CD8-positive, alpha-beta T cell (primary cell): ENCODE measurements at regions of chr20 and their contacts with region 1.

Region 1: GRCh38 chr20:32484958-32485769 is 100.0 kb downstream of the NOL4L start:
- DNase-seq: peak; percentile 72 to 92 (median 86)
- ATAC-seq: peak; percentile 82
- H3K4me3 ChIP-seq: peak overlapping the region; percentile 67 to 77
- H3K4me3 Mint-ChIP-seq: peak overlapping the region; percentile 91
- H3K27ac ChIP-seq: peak overlapping the region; percentile 46 to 62
- H3K27ac Mint-ChIP-seq: peak overlapping the region; percentile 94
- H3K4me1 ChIP-seq: peaks cover 36% of the 10 kb centered on the region
- H3K4me1 Mint-ChIP-seq: peaks cover 46% of the 10 kb centered on the region
- H3K27me3 ChIP-seq: no peaks in the 10 kb centered on the region
- H3K27me3 Mint-ChIP-seq: no peaks in the 10 kb centered on the region
- CTCF ChIP-seq: peak; percentile 88

Region 2: DNA sequence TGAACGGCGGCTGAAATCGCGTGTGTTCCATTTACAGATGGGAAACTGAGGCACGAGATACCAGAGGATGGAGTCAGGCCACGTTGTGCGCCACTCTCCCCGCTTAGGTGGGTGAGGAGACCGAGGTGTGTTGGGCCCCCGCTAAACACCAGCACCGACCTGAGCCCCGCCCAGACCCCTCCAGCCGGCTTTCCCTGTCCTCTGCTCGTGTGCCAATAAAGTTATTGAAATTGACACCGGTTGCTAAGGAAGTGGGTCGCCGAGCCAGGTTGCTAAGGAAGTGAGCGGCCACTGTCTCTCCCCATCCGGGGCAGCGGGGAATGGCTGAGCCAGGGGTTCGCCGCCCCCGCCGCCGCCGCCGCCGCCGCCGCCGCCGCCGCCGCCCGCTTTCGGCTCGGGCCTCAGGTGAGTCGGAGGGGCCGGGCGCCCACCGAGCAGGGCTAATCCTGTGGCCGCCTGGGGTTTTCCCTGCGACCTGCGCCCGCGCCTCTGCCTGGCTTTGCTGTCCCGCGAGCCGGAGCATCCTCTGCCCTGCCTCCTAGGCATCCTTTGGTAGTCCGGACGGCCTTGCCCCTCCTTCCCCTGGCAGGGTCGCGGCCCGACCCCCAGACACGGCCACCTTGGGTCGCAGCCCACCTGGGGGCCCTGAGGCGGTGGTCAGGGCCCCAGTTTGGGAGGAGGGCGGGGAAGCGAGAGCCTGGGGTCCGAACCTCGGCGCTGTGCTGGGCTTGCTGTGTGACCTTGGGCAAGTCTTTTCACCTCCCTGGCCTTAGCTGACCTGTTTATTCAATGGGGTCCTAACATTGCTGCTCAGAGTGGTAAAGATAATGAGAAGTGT is 207.6 kb before region 1 on chr20 and contains the start of gene KIF3B:
- CTCF ChIA-PET with region 1: no interaction called
- POLR2A ChIA-PET with region 1: no interaction called
- intact Hi-C with region 1: loop called in 1 of 2 experiments (anchors 5 kb)
- DNase-seq: peak; percentile 68 to 94 (median 87)
- ATAC-seq: peak; percentile 85
- H3K4me3 ChIP-seq: peak within 1 kb of the TSS; percentile 91 to 97
- H3K4me3 Mint-ChIP-seq: peak within 1 kb of the TSS; percentile 90
- H3K27ac ChIP-seq: peak within 1 kb of the TSS; percentile 64 to 86
- H3K27ac Mint-ChIP-seq: peak within 1 kb of the TSS; percentile 93
- H3K4me1 ChIP-seq: peaks cover 20% of the 10 kb centered on the region
- H3K4me1 Mint-ChIP-seq: peaks cover 44% of the 10 kb centered on the region
- H3K27me3 ChIP-seq: no peaks in the 10 kb centered on the region
- H3K27me3 Mint-ChIP-seq: no peaks in the 10 kb centered on the region
- CTCF ChIP-seq: no peak
- total RNA-seq, gene KIF3B: 7.1 to 8.1 TPM

Region 3: GRCh38 chr20:32437391-32438074 is 47.6 kb before region 1 on chr20:
- CTCF ChIA-PET with region 1: interaction called, 3 read pairs
- POLR2A ChIA-PET with region 1: interaction called, 3 read pairs
- intact Hi-C with region 1: loop called in 1 of 2 experiments (anchors 2 kb)
- DNase-seq: peak in 3 of 9 experiments; percentile 26 to 48 (median 39)
- ATAC-seq: peak; percentile 54
- H3K4me3 ChIP-seq: no peak overlapping the region
- H3K4me3 Mint-ChIP-seq: no peak overlapping the region
- H3K27ac ChIP-seq: no peak overlapping the region
- H3K27ac Mint-ChIP-seq: no peak overlapping the region
- H3K4me1 ChIP-seq: no peaks in the 10 kb centered on the region
- H3K4me1 Mint-ChIP-seq: peaks cover 8% of the 10 kb centered on the region
- H3K27me3 ChIP-seq: no peaks in the 10 kb centered on the region
- H3K27me3 Mint-ChIP-seq: no peaks in the 10 kb centered on the region
- CTCF ChIP-seq: peak; percentile 26

Region 4: DNA sequence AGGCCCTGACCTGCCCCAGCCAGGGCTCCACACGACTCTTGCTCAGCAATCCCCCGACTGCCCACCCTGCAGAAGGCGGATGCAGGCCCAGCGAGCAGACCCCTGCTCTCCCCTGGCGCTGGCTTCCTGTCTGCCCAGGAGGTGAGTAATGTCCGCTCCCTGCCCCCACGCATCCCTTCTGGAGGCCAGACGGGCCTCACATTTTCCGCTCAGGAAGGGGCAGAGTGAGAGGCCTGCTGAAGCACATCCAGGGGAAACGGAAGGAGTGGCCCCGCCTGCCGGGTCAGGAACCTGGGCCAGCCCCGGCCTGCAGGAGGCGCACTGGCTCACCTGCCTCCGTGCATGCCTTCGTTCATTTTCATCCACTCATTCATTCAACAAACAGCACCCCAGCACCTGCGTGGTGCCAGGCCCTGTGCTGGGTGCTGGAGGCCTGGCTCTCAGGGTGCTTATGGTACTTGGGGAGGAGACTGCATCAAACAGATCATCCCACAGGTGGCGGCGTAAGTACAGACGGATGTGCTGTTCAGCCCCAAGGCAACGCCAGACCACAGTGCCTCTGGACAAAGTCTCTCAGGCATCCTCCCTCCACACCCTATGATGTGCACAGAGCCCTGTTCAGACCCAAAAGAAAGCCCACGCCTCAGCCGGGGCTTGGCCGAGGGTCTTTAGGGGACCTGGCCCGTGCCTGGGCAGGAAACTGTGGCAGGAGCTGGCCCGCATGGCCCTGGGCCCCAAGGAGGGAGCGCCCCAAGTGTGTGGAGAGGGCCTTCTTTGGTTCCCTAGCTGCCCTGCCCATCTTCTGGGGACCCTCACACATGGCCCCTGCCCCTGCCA is 14.9 kb before region 1 on chr20:
- CTCF ChIA-PET with region 1: interaction called, 4 read pairs
- POLR2A ChIA-PET with region 1: interaction called, 3 read pairs
- intact Hi-C with region 1: loop called in 1 of 2 experiments (anchors 2 kb)
- DNase-seq: peak in 3 of 9 experiments; percentile 24 to 45 (median 37)
- ATAC-seq: peak; percentile 36
- H3K4me3 ChIP-seq: no peak overlapping the region
- H3K4me3 Mint-ChIP-seq: no peak overlapping the region
- H3K27ac ChIP-seq: no peak overlapping the region
- H3K27ac Mint-ChIP-seq: peak overlapping the region; percentile 79
- H3K4me1 ChIP-seq: peaks cover 1% of the 10 kb centered on the region
- H3K4me1 Mint-ChIP-seq: peaks cover 14% of the 10 kb centered on the region
- H3K27me3 ChIP-seq: no peaks in the 10 kb centered on the region
- H3K27me3 Mint-ChIP-seq: no peaks in the 10 kb centered on the region
- CTCF ChIP-seq: no peak

Region 5: DNA sequence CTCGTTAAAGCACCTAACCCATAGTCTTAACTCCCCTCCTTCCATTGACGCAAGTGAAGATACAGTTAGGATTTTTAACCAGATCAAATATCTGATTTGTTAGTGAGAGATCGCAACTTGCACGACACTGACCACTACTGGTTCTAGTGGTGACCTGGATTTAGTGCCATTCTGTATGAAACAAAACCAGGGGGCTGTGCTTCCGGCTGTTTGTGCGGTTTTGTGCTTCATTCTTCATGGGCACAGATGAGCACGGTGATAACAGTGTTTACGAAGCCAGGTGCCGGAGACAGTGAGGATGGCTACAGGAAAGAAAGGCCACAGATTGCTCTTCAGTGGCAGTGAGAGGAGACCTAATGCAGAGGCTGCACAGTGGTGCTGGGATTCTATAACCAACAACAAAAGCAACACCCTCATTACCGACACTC is 24.5 kb after region 1 on chr20:
- CTCF ChIA-PET with region 1: interaction called, 5 read pairs
- POLR2A ChIA-PET with region 1: interaction called, 38 read pairs
- intact Hi-C with region 1: loop called (anchors 1 to 2 kb)
- DNase-seq: peak; percentile 46 to 90 (median 81)
- ATAC-seq: peak; percentile 78
- H3K4me3 ChIP-seq: peak overlapping the region; percentile 51 to 77
- H3K4me3 Mint-ChIP-seq: peak overlapping the region; percentile 88
- H3K27ac ChIP-seq: peak overlapping the region; percentile 69 to 72
- H3K27ac Mint-ChIP-seq: peak overlapping the region; percentile 97
- H3K4me1 ChIP-seq: peaks cover 70% of the 10 kb centered on the region
- H3K4me1 Mint-ChIP-seq: peaks cover 77% of the 10 kb centered on the region
- H3K27me3 ChIP-seq: no peaks in the 10 kb centered on the region
- H3K27me3 Mint-ChIP-seq: no peaks in the 10 kb centered on the region
- CTCF ChIP-seq: no peak

Region 6: DNA sequence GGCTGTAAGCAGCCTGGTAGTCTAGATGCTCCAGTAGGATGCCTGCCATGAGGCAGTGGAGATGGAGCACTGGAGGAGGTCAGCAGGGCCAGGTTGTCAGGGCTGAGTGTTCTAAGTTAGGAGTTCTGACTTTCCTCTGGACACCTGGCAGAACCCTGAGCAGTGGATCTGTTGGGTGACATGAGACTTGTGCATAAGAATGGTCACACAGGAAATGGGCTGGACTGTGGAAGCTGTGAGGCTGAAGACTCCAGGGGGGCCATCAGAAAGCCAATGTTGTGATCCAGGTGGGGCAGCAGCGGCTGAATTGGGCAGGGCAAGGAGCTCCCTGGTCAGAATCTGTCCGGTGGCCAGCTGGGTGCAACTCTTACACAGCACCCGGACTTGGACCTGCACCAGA is 212.4 kb after region 1 on chr20:
- CTCF ChIA-PET with region 1: no interaction called
- POLR2A ChIA-PET with region 1: no interaction called
- intact Hi-C with region 1: no loop called
- DNase-seq: no peak
- ATAC-seq: no peak
- H3K4me3 ChIP-seq: no peak overlapping the region
- H3K4me3 Mint-ChIP-seq: no peak overlapping the region
- H3K27ac ChIP-seq: no peak overlapping the region
- H3K27ac Mint-ChIP-seq: no peak overlapping the region
- H3K4me1 ChIP-seq: no peaks in the 10 kb centered on the region
- H3K4me1 Mint-ChIP-seq: no peaks in the 10 kb centered on the region
- H3K27me3 ChIP-seq: no peaks in the 10 kb centered on the region
- H3K27me3 Mint-ChIP-seq: no peaks in the 10 kb centered on the region
- CTCF ChIP-seq: no peak